Activated B cell treated with CpG ODN at 0.5 μM for 24 hours (primary cell): ENCODE measurements at regions of chr6 and their contacts with region 1.

Region 1: GRCh38 chr6:2971420-2972218 is at the start of gene SERPINB6:
- DNase-seq: peak; percentile 60
- ATAC-seq: peak; percentile 72
- H3K4me3 Mint-ChIP-seq: peak within 1 kb of the TSS; percentile 88
- H3K27ac Mint-ChIP-seq: peak within 1 kb of the TSS; percentile 85
- H3K4me1 Mint-ChIP-seq: peaks cover 40% of the 10 kb centered on the region
- H3K27me3 Mint-ChIP-seq: peaks cover 1% of the 10 kb centered on the region
- CTCF ChIP-seq: no peak
- total RNA-seq, gene SERPINB6: 51.7 and 56.1 TPM in 2 replicates

Region 2: GRCh38 chr6:2940010-2940850 is 31.4 kb before region 1 on chr6:
- CTCF ChIA-PET with region 1: no interaction called
- POLR2A ChIA-PET with region 1: interaction called, 10 read pairs
- intact Hi-C with region 1: loop called (anchors 2 kb)
- DNase-seq: peak; percentile 39
- ATAC-seq: peak; percentile 81
- H3K4me3 Mint-ChIP-seq: peak overlapping the region; percentile 82
- H3K27ac Mint-ChIP-seq: peak overlapping the region; percentile 94
- H3K4me1 Mint-ChIP-seq: peaks cover 69% of the 10 kb centered on the region
- H3K27me3 Mint-ChIP-seq: no peaks in the 10 kb centered on the region
- CTCF ChIP-seq: no peak

Region 3: GRCh38 chr6:2952557-2953095 is 19.0 kb before region 1 on chr6:
- CTCF ChIA-PET with region 1: interaction called, 6 read pairs
- POLR2A ChIA-PET with region 1: interaction called, 3 read pairs
- intact Hi-C with region 1: loop called (anchors 1 kb)
- DNase-seq: peak; percentile 41
- ATAC-seq: peak; percentile 95
- H3K4me3 Mint-ChIP-seq: peak overlapping the region; percentile 75
- H3K27ac Mint-ChIP-seq: peak overlapping the region; percentile 79
- H3K4me1 Mint-ChIP-seq: peaks cover 17% of the 10 kb centered on the region
- H3K27me3 Mint-ChIP-seq: no peaks in the 10 kb centered on the region
- CTCF ChIP-seq: no peak

Region 4: DNA sequence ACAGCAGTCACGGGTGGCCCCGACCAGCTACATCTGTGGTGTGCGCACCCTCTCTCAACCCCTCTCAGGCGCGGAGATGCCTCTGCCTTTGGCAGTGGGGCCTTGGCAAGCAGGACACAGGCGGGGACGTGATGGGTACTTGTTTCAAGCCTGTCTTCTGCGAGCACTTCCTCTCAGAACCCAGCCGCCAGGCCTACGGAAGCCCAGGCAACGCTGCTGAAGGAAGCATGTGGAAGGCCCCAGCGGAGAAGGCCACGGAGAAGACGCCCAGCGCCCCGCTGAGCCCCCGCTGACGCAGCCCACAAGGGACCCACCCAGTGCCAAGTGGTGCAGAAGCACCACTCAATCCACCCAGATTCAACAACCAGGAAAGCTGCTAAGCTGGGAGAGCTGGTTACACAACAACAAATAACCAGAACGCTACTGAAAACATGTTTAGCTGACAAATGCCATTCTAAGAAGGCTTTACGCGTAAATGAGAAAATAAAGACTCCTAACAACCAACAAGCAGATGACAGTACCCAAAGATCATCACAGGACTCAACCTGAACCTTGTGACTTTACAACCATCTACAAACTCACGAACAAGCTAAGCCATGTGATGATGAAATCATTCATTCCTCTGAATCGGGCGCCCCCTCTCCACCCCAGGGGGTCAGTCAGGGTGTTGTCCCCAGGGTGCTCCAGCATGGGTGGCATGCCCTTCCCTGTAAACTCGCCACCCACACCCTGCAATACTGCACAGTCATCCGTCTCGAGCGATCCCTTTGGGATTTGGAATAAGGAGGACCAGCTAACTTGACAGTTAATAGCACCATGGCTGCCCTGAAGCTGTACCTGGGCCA is 13.1 kb before region 1 on chr6:
- CTCF ChIA-PET with region 1: no interaction called
- POLR2A ChIA-PET with region 1: no interaction called
- intact Hi-C with region 1: loop called (anchors 1 kb)
- DNase-seq: no peak
- ATAC-seq: peak; percentile 50
- H3K4me3 Mint-ChIP-seq: no peak overlapping the region
- H3K27ac Mint-ChIP-seq: no peak overlapping the region
- H3K4me1 Mint-ChIP-seq: peaks cover 24% of the 10 kb centered on the region
- H3K27me3 Mint-ChIP-seq: no peaks in the 10 kb centered on the region
- CTCF ChIP-seq: no peak